Activated CD4-positive, alpha-beta T cell treated with anti-CD3 and anti-CD28 coated beads for 36 hours (primary cell): ENCODE measurements at regions of chr14 and their contacts with region 1.

Region 1: GRCh38 chr14:57182760-57183503 is 85.8 kb downstream of the EXOC5 start:
- DNase-seq: peak; percentile 29
- ATAC-seq: no peak
- H3K4me3 Mint-ChIP-seq: no peak overlapping the region
- H3K27ac Mint-ChIP-seq: no peak overlapping the region
- H3K4me1 Mint-ChIP-seq: no peaks in the 10 kb centered on the region
- H3K27me3 Mint-ChIP-seq: peaks cover 15% of the 10 kb centered on the region

Region 2: GRCh38 chr14:56555921-56556570 is 626.9 kb before region 1 on chr14:
- CTCF ChIA-PET with region 1: no interaction called
- POLR2A ChIA-PET with region 1: no interaction called
- intact Hi-C with region 1: loop called in 1 of 2 experiments (anchors 10 kb)
- DNase-seq: no peak
- ATAC-seq: no peak
- H3K4me3 Mint-ChIP-seq: no peak overlapping the region
- H3K27ac Mint-ChIP-seq: no peak overlapping the region
- H3K4me1 Mint-ChIP-seq: no peaks in the 10 kb centered on the region
- H3K27me3 Mint-ChIP-seq: peaks cover 17% of the 10 kb centered on the region

Region 3: GRCh38 chr14:56659964-56660551 is 522.9 kb before region 1 on chr14:
- CTCF ChIA-PET with region 1: no interaction called
- POLR2A ChIA-PET with region 1: no interaction called
- intact Hi-C with region 1: loop called in 1 of 2 experiments (anchors 10 kb)
- DNase-seq: no peak
- ATAC-seq: no peak
- H3K4me3 Mint-ChIP-seq: no peak overlapping the region
- H3K27ac Mint-ChIP-seq: no peak overlapping the region
- H3K4me1 Mint-ChIP-seq: no peaks in the 10 kb centered on the region
- H3K27me3 Mint-ChIP-seq: peaks cover 2% of the 10 kb centered on the region